Calu3 (cell line): ENCODE measurements at regions of chr20 and their contacts with region 1.

Region 1: GRCh38 chr20:41693136-41693979 is 75.2 kb upstream of the CHD6 start:
- DNase-seq: peak; percentile 84
- H3K4me3 Mint-ChIP-seq: peak overlapping the region; percentile 84
- H3K27ac Mint-ChIP-seq: peak overlapping the region; percentile 69
- H3K4me1 Mint-ChIP-seq: peaks cover 18% of the 10 kb centered on the region
- H3K27me3 Mint-ChIP-seq: peaks cover 13% of the 10 kb centered on the region
- CTCF ChIP-seq: peak; percentile 61

Region 2: DNA sequence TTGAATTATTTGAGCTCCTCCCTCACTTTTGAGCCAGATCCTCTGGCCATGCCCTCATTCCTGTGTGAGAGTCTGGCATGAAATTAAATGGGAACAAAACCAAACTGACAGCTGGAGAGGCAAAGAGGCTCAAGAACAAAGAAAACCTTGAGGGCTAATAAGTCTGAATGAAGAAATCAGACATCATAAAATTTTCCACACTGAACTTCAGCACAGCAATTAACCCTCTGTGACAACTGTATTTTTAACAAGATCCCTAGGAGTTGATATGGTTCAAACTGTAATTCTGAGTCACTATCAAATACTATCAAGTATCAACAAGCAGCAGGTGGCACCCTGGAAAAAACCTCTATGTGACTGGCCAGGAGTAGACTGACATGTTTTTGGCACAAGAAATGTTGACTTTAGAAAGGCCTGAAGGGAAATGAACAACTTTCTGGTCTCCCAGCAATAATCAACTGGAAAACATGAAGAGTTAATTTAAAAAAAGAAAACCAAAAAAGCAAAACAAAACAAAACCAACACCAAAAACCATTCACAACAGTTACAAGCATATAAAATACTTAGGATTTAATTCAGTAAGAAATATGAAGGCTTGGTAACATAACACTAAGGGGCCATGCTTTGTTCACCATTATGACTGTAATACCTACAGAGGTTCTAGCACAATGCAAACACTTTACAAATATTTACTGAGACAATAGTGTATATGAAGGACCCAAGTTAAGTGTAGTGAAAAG is 217.2 kb before region 1 on chr20:
- CTCF ChIA-PET with region 1: no interaction called
- intact Hi-C with region 1: loop called (anchors 5 kb)
- DNase-seq: no peak
- H3K4me3 Mint-ChIP-seq: no peak overlapping the region
- H3K27ac Mint-ChIP-seq: no peak overlapping the region
- H3K4me1 Mint-ChIP-seq: peaks cover 17% of the 10 kb centered on the region
- H3K27me3 Mint-ChIP-seq: no peaks in the 10 kb centered on the region
- CTCF ChIP-seq: no peak

Region 3: GRCh38 chr20:41617931-41618806 is 75.2 kb before region 1 on chr20 and contains the start of gene CHD6:
- CTCF ChIA-PET with region 1: interaction called, 6 read pairs
- intact Hi-C with region 1: loop called (anchors 1 kb)
- DNase-seq: peak; percentile 100
- H3K4me3 Mint-ChIP-seq: peak within 1 kb of the TSS; percentile 78
- H3K27ac Mint-ChIP-seq: peak within 1 kb of the TSS; percentile 66
- H3K4me1 Mint-ChIP-seq: peaks cover 37% of the 10 kb centered on the region
- H3K27me3 Mint-ChIP-seq: no peaks in the 10 kb centered on the region
- CTCF ChIP-seq: no peak
- total RNA-seq, gene CHD6: 94.5 and 98.5 TPM in 2 replicates

Region 4: GRCh38 chr20:41649971-41650943 is 43.1 kb before region 1 on chr20:
- CTCF ChIA-PET with region 1: no interaction called
- intact Hi-C with region 1: loop called (anchors 2 kb)
- DNase-seq: peak; percentile 56
- H3K4me3 Mint-ChIP-seq: no peak overlapping the region
- H3K27ac Mint-ChIP-seq: no peak overlapping the region
- H3K4me1 Mint-ChIP-seq: peaks cover 18% of the 10 kb centered on the region
- H3K27me3 Mint-ChIP-seq: peaks cover 10% of the 10 kb centered on the region
- CTCF ChIP-seq: no peak